AG04449 (cell line): ENCODE measurements at regions of chr19 and their contacts with region 1.

Region 1: GRCh38 chr19:7986321-7987083 is 18.9 kb downstream of the ELAVL1 start:
- DNase-seq: peak; percentile 10
- H3K4me3 ChIP-seq: no peak overlapping the region
- CTCF ChIP-seq: no peak

Region 2: DNA sequence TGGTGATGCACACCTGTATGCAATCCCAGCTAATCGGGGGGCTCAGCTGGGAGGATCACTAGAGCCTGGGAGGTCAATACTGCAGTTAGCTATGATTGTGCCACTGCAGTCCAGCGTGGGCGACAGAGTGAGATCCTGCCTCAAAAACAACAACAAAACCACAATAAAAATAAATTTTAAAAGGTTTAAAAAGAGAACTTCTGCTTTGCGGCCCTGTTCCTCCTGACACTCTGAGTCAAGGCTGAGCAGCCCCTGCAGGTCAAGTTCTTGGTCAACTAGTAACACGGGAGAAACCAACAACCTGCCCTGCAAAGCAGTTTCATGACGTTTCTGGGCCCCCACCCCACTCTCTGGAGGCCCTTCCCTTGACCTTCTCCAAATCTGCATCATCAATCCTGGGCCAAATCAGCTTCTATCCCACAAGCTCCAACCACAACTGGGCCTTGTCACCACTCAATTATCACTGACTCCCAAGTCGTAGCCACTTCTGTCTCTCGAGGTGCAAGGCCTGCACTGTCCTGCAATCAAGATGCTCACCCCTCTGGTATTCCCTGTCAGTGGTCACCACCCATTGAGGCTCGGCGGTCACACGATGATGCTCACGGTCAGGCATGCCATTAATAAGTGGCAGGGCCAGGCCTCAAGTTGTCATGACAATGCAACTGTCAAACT is 11.4 kb after region 1 on chr19:
- CTCF ChIA-PET with region 1: interaction called, 56 read pairs
- POLR2A ChIA-PET with region 1: interaction called, 3 read pairs
- DNase-seq: no peak
- H3K4me3 ChIP-seq: no peak overlapping the region
- CTCF ChIP-seq: no peak

Region 3: GRCh38 chr19:8005534-8006256 is 19.2 kb after region 1 on chr19 and contains the start of gene ELAVL1:
- CTCF ChIA-PET with region 1: interaction called, 56 read pairs
- POLR2A ChIA-PET with region 1: interaction called, 3 read pairs
- DNase-seq: peak; percentile 7
- H3K4me3 ChIP-seq: peak within 1 kb of the TSS; percentile 97
- CTCF ChIP-seq: no peak

Region 4: GRCh38 chr19:8028951-8029491 is 42.5 kb after region 1 on chr19:
- CTCF ChIA-PET with region 1: no interaction called
- POLR2A ChIA-PET with region 1: no interaction called
- DNase-seq: no peak
- H3K4me3 ChIP-seq: no peak overlapping the region
- CTCF ChIP-seq: no peak